Heart right ventricle (tissue), 16 donors: ENCODE measurements at regions of chr16 and their contacts with region 1.

Region 1: GRCh38 chr16:76946879-76947278 is 244.1 kb upstream of the MON1B start:
- DNase-seq: no peak
- ATAC-seq: peak in 3 of 8 donors; percentile 61 to 86 (median 76)
- H3K4me3 ChIP-seq: no peak overlapping the region
- H3K27ac ChIP-seq: no peak overlapping the region
- H3K4me1 ChIP-seq: peaks cover 0 to 16% (median 0%) of the 10 kb centered on the region in 9 donors
- H3K27me3 ChIP-seq: no peaks in the 10 kb centered on the region
- CTCF ChIP-seq: no peak

Region 2: GRCh38 chr16:75687361-75687760 is 1259.5 kb before region 1 on chr16:
- intact Hi-C with region 1: loop called in 1 of 10 experiments (anchors 10 kb)
- DNase-seq: no peak
- ATAC-seq: peak in 3 of 8 donors; percentile 63 to 69 (median 65)
- H3K4me3 ChIP-seq: no peak overlapping the region
- H3K27ac ChIP-seq: no peak overlapping the region
- H3K4me1 ChIP-seq: peaks cover 0 to 5% (median 0%) of the 10 kb centered on the region in 9 donors
- H3K27me3 ChIP-seq: no peaks in the 10 kb centered on the region
- CTCF ChIP-seq: no peak